ENCODE measurements at regions of chr10 and their contacts with region 1.

Region 1: GRCh38 chr10:104121520-104122224 is at the start of gene SFR1:
- DNase-seq: peak; percentile 99
- H3K4me3 ChIP-seq: peak within 1 kb of the TSS; percentile 67
- H3K27ac ChIP-seq: peak within 1 kb of the TSS; percentile 91
- H3K4me1 ChIP-seq: peaks cover 23% of the 10 kb centered on the region
- H3K27me3 ChIP-seq: no peaks in the 10 kb centered on the region
- CTCF ChIP-seq: peak; percentile 84
- total RNA-seq, gene SFR1: 11.2 and 12.6 TPM in 2 replicates

Region 2: GRCh38 chr10:103881416-103882284 is 240.0 kb before region 1 on chr10:
- CTCF ChIA-PET with region 1: no interaction called
- POLR2A ChIA-PET with region 1: no interaction called
- intact Hi-C with region 1: no loop called
- DNase-seq: no peak
- H3K4me3 ChIP-seq: no peak overlapping the region
- H3K27ac ChIP-seq: no peak overlapping the region
- H3K4me1 ChIP-seq: no peaks in the 10 kb centered on the region
- H3K27me3 ChIP-seq: no peaks in the 10 kb centered on the region
- CTCF ChIP-seq: no peak

Region 3: DNA sequence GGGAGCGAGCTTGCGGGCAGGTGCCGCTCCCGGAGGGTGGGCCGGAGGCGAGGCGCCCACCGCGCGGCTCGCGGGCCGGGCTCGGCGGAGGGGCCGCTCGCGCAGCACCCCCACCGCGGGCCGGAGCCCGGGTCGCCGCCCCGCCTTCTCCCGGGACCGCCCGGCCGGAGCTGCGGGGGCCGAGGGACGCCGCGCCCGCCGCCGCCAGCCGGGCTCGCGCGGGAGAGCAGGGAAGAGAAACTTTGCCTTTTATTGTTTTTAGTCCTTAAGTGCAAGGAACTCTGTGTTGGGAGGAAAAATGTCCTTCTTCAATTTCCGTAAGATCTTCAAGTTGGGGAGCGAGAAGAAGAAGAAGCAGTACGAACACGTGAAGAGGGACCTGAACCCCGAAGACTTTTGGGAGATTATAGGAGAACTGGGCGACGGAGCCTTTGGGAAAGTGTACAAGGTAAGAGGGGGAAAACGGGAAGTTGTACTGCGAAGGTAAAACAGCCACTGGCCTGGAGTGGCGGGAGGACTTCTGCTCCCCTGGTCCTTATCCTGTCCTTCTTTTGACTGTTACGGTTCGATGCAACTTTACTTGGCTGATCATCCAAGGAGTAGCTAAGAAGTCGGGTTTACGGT is 154.1 kb before region 1 on chr10:
- CTCF ChIA-PET with region 1: no interaction called
- POLR2A ChIA-PET with region 1: no interaction called
- intact Hi-C with region 1: loop called (anchors 2 kb)
- DNase-seq: peak; percentile 44
- H3K4me3 ChIP-seq: peak overlapping the region; percentile 72
- H3K27ac ChIP-seq: peak overlapping the region; percentile 86
- H3K4me1 ChIP-seq: peaks cover 6% of the 10 kb centered on the region
- H3K27me3 ChIP-seq: no peaks in the 10 kb centered on the region
- CTCF ChIP-seq: no peak

Region 4: DNA sequence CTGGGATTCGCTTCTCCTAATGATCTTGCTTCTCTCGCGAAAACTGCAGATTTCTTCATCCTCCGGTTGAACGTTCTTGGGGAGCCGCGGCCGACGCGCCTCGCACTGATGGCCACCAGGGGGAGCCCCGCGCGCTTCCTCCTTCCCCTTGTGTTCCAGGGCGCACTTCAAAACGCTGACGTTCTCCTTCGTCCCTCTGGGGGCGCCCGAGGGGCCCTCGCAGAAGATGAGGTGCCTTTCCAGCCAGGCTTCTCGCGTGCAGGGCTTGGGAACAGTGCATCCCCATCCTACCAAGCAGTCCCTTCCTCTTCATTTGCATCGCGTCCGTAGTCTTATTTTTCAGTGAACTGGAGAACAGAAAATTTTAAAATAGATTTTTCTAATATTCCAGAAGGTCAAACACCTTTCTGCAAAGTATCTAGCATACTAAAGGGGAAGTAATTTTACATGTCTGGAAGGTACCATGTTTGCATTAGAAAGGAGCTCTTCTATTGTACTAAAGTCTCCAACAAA is 169.8 kb after region 1 on chr10:
- CTCF ChIA-PET with region 1: no interaction called
- POLR2A ChIA-PET with region 1: interaction called, 11 read pairs
- intact Hi-C with region 1: no loop called
- DNase-seq: peak; percentile 92
- H3K4me3 ChIP-seq: no peak overlapping the region
- H3K27ac ChIP-seq: no peak overlapping the region
- H3K4me1 ChIP-seq: no peaks in the 10 kb centered on the region
- H3K27me3 ChIP-seq: peaks cover 43% of the 10 kb centered on the region
- CTCF ChIP-seq: peak; percentile 100

Region 5: GRCh38 chr10:104393387-104393786 is 271.7 kb after region 1 on chr10:
- CTCF ChIA-PET with region 1: no interaction called
- POLR2A ChIA-PET with region 1: no interaction called
- intact Hi-C with region 1: no loop called
- DNase-seq: no peak
- H3K4me3 ChIP-seq: no peak overlapping the region
- H3K27ac ChIP-seq: no peak overlapping the region
- H3K4me1 ChIP-seq: no peaks in the 10 kb centered on the region
- H3K27me3 ChIP-seq: peaks cover 96% of the 10 kb centered on the region
- CTCF ChIP-seq: no peak

Region 6: DNA sequence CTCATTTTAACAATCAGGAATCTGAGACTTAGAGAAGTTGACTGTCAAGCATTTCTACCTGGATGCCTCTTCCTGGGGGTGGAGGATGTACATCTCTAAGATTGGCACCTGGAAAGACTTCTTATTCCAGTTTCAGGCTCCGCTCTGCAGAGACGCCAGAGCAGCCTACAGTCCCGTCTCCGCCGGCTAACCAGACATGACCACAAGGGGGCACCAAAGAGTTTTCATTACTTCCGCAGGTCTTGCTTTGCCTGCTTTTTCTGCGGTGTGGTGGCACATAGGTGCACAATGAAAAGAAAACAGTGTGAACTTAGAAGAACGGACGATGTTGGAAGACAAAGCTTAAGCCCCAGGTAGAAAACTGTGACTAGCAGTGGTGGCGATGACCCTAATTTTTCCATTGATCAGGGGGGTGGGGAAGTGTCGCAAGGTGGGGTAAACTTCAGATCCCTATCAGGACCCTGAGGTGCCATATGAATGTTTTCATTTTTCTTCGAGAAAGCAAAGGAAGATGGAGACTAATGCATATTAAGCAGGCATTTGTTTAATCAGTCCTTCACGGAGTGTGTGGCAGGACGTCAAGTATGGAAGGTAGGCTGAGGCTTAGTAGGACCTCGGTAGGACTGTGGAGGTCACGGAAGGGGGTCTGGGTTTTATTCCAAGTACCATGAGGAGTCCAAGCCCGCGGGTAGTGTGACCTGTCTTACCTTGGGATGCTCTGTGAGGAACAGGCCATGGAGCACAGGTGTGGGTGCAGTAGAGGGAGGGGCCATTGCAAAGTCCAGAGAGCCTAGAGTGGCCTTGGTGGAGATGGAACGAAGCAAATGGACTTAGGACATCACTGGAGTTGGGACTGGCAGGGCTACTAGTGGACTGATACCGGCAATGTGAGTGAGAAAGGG is 459.4 kb after region 1 on chr10:
- CTCF ChIA-PET with region 1: no interaction called
- POLR2A ChIA-PET with region 1: no interaction called
- intact Hi-C with region 1: loop called (anchors 5 kb)
- DNase-seq: peak; percentile 74
- H3K4me3 ChIP-seq: no peak overlapping the region
- H3K27ac ChIP-seq: no peak overlapping the region
- H3K4me1 ChIP-seq: no peaks in the 10 kb centered on the region
- H3K27me3 ChIP-seq: peaks cover 25% of the 10 kb centered on the region
- CTCF ChIP-seq: peak; percentile 89